ENCODE measurements at regions of chr16 and their contacts with region 1.

Region 1: DNA sequence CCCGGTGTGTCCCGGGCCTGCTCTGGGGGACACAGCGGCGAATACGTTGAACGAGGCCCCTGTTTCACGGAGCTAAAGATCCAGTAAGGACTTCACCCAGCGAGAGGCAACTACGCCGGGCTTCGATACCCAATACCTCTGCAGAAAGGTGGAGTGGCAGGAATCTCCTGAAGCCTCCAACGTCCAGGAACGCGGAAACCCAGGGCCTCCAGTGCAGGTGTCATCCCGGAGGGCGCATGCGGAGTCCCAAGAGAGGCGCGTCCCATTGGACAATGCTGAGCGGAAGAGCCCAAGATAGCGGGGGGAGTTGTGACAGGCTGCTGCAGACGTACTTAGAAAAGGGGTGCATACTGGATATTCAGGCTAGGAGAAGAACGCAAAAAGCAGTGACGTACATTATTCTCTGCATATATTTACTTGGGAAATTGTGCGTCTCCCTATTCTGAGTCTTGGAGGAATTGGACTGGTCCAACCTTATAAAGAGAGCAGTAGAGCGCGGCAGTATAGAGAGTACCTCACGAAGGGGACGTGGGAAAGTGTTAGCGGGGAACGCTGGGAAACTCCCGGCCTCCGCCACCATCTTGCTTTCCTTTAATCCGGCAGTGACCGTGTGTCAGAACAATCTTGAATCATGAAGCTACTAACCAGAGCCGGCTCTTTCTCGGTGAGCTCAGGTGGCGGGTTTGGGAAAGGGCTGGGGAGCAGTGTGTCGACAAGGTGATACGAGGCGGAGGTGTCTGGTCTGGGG is at the start of gene UQCRC2:
- DNase-seq: peak; percentile 86
- ATAC-seq: peak; percentile 93
- H3K4me3 ChIP-seq: peak within 1 kb of the TSS; percentile 96
- H3K27ac ChIP-seq: peak within 1 kb of the TSS; percentile 81
- H3K4me1 ChIP-seq: peaks cover 16% of the 10 kb centered on the region
- H3K27me3 ChIP-seq: no peaks in the 10 kb centered on the region
- CTCF ChIP-seq: no peak
- total RNA-seq, gene UQCRC2: 73.5 and 116 TPM in 2 replicates

Region 2: GRCh38 chr16:21937336-21937829 is 15.6 kb before region 1 on chr16:
- CTCF ChIA-PET with region 1: no interaction called
- POLR2A ChIA-PET with region 1: no interaction called
- intact Hi-C with region 1: no loop called
- DNase-seq: no peak
- ATAC-seq: no peak
- H3K4me3 ChIP-seq: no peak overlapping the region
- H3K27ac ChIP-seq: no peak overlapping the region
- H3K4me1 ChIP-seq: no peaks in the 10 kb centered on the region
- H3K27me3 ChIP-seq: no peaks in the 10 kb centered on the region
- CTCF ChIP-seq: no peak

Region 3: GRCh38 chr16:22098405-22099255 is 145.7 kb after region 1 on chr16:
- CTCF ChIA-PET with region 1: interaction called, 8 read pairs
- POLR2A ChIA-PET with region 1: no interaction called
- intact Hi-C with region 1: loop called (anchors 2 kb)
- DNase-seq: peak; percentile 60
- ATAC-seq: peak; percentile 77
- H3K4me3 ChIP-seq: no peak overlapping the region
- H3K27ac ChIP-seq: no peak overlapping the region
- H3K4me1 ChIP-seq: no peaks in the 10 kb centered on the region
- H3K27me3 ChIP-seq: no peaks in the 10 kb centered on the region
- CTCF ChIP-seq: peak; percentile 68

Measured in PC-3 (cell line).